ENCODE measurements at regions of chr17 and their contacts with region 1.

Region 1: GRCh38 chr17:38799378-38800236 is at the start of gene PIP4K2B:
- DNase-seq: peak; percentile 98
- ATAC-seq: peak; percentile 92
- H3K4me3 ChIP-seq: peak within 1 kb of the TSS; percentile 76 to 98 (median 90)
- H3K27ac ChIP-seq: peak within 1 kb of the TSS; percentile 99
- H3K4me1 ChIP-seq: peaks cover 39% of the 10 kb centered on the region
- H3K27me3 ChIP-seq: no peaks in the 10 kb centered on the region
- CTCF ChIP-seq: 0 out of 2 replicates have a peak, but pooled peaks have one; percentile 12
- EP300 ChIP-seq: peak in 1 of 2 experiments; percentile 9; a peak in 2 of 4 replicates
- POLR2A ChIP-seq: peak in 1 of 2 experiments; percentile 79; a peak in 3 of 4 replicates
- RAD21 ChIP-seq: peak; percentile 61
- total RNA-seq, gene PIP4K2B: 54.0 and 63.6 TPM in 2 replicates

Region 2: DNA sequence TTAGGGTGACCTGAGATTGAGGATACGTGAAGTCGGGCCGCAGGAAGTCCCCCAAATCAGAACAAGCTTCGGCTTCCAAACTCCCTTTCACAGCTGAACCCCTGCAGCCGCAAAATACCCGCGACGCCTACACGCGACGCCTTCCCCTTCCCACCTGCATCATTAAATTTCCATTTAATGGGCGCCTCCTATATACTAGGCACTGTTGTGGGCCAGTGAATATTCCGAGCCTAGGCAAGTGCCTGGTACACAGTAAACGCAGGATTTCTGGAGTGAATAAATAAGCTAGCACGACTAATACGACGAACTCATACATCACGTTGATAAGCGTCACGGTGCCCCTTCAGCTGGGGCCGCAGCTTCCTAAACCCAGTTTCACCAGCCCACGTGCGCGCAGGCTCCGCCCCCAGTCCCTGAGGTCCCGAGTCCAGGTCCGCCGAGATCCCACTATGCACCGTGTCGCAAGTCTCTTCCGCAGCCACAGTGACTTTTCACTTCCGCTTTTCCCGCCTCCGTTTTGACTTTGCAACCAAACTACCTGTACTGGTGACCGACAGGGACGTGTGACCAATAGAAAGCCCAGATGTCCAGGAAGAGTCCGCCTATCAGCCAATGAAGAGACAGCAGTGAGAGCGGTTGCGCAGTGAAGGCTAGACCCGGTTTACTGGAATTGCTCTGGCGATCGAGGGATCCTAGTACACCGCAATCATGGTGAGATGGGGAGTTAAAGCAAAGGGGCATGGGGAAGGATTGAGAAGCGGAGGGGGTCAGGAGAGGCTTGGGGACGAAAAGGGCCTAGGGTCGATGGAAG is 47.3 kb before region 1 on chr17 and contains the start of gene PSMB3:
- CTCF ChIA-PET with region 1: no interaction called
- POLR2A ChIA-PET with region 1: interaction called, 11 read pairs
- in situ Hi-C with region 1: no loop called
- intact Hi-C with region 1: loop called (anchors 2 kb)
- DNase-seq: peak; percentile 100
- ATAC-seq: peak; percentile 86
- H3K4me3 ChIP-seq: peak within 1 kb of the TSS; percentile 82 to 93 (median 84)
- H3K27ac ChIP-seq: peak within 1 kb of the TSS; percentile 81
- H3K4me1 ChIP-seq: peaks cover 30% of the 10 kb centered on the region
- H3K27me3 ChIP-seq: no peaks in the 10 kb centered on the region; a peak in 1 of 5 replicates
- CTCF ChIP-seq: peak; percentile 2; the same call in 1 of the 2 replicates
- EP300 ChIP-seq: 0 out of 4 replicates have a peak, but pooled peaks of 1 of the 2 experiments have one; percentile 15
- POLR2A ChIP-seq: peak; percentile 77 to 82
- RAD21 ChIP-seq: no peak
- total RNA-seq, gene PSMB3: 517 and 688 TPM in 2 replicates